ENCODE measurements at regions of chr3 and their contacts with region 1.

Region 1: GRCh38 chr3:48301020-48301796 is 32.3 kb downstream of the SPINK8 start:
- DNase-seq: peak; percentile 69 to 95 (median 81)
- ATAC-seq: peak; percentile 97
- H3K4me3 ChIP-seq: peak within 1 kb of the TSS; percentile 89
- H3K4me3 Mint-ChIP-seq: peak within 1 kb of the TSS; percentile 84 to 97 (median 91)
- H3K27ac ChIP-seq: peak within 1 kb of the TSS; percentile 96
- H3K27ac Mint-ChIP-seq: peak within 1 kb of the TSS; percentile 81 to 98 (median 94)
- H3K4me1 ChIP-seq: peaks cover 10 to 12% of the 10 kb centered on the region in 2 donors
- H3K4me1 Mint-ChIP-seq: peaks cover 26 to 47% (median 40%) of the 10 kb centered on the region in 7 donors
- H3K27me3 ChIP-seq: no peaks in the 10 kb centered on the region
- H3K27me3 Mint-ChIP-seq: peaks cover 0 to 13% (median 0%) of the 10 kb centered on the region in 5 donors

Region 2: GRCh38 chr3:48088749-48089466 is 212.3 kb before region 1 on chr3:
- CTCF ChIA-PET with region 1: no interaction called
- POLR2A ChIA-PET with region 1: no interaction called
- intact Hi-C with region 1: loop called in 1 of 2 experiments (anchors 2 kb)
- DNase-seq: peak; percentile 89 to 96 (median 94)
- ATAC-seq: peak; percentile 97
- H3K4me3 ChIP-seq: peak overlapping the region; percentile 85
- H3K4me3 Mint-ChIP-seq: peak overlapping the region; percentile 90 to 99 (median 96)
- H3K27ac ChIP-seq: peak overlapping the region; percentile 95
- H3K27ac Mint-ChIP-seq: peak overlapping the region; percentile 71 to 99 (median 98)
- H3K4me1 ChIP-seq: peaks cover 7 to 11% of the 10 kb centered on the region in 2 donors
- H3K4me1 Mint-ChIP-seq: peaks cover 14 to 33% (median 29%) of the 10 kb centered on the region in 7 donors
- H3K27me3 ChIP-seq: no peaks in the 10 kb centered on the region
- H3K27me3 Mint-ChIP-seq: peaks cover 0 to 18% (median 0%) of the 10 kb centered on the region in 5 donors

Region 3: DNA sequence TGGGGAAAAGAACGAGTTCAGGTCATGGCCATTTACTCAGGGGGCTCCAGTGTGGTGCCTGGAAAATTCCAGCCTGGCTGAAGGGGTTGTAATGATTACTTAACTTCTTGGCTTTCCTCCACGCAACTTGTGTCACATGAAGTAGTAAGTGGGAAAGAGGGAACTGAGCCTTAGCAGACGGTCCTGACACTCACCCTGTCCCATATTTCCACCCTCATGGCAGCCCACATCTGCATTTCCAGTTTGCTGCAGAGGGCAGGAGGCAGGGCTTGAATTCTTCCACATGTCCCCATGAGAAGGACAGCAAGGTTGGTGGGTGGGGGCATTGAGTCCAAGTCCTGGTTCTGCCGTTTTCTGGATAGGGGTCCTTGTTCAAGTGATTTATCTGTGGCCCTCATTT is 85.7 kb before region 1 on chr3:
- CTCF ChIA-PET with region 1: no interaction called
- POLR2A ChIA-PET with region 1: no interaction called
- intact Hi-C with region 1: no loop called
- DNase-seq: no peak
- ATAC-seq: no peak
- H3K4me3 ChIP-seq: no peak overlapping the region
- H3K4me3 Mint-ChIP-seq: no peak overlapping the region
- H3K27ac ChIP-seq: no peak overlapping the region
- H3K27ac Mint-ChIP-seq: no peak overlapping the region
- H3K4me1 ChIP-seq: no peaks in the 10 kb centered on the region
- H3K4me1 Mint-ChIP-seq: no peaks in the 10 kb centered on the region
- H3K27me3 ChIP-seq: no peaks in the 10 kb centered on the region
- H3K27me3 Mint-ChIP-seq: peaks cover 0 to 7% (median 0%) of the 10 kb centered on the region in 5 donors

Region 4: GRCh38 chr3:48268381-48269183 is 32.6 kb before region 1 on chr3:
- CTCF ChIA-PET with region 1: interaction called, 5 read pairs
- POLR2A ChIA-PET with region 1: interaction called, 8 read pairs
- intact Hi-C with region 1: loop called (anchors 1 kb)
- DNase-seq: peak; percentile 25 to 92 (median 80)
- ATAC-seq: peak; percentile 97
- H3K4me3 ChIP-seq: peak overlapping the region; percentile 40
- H3K4me3 Mint-ChIP-seq: peak overlapping the region; percentile 74 to 93 (median 82)
- H3K27ac ChIP-seq: peak overlapping the region; percentile 71
- H3K27ac Mint-ChIP-seq: peak overlapping the region; percentile 89 to 99 (median 93)
- H3K4me1 ChIP-seq: peaks cover 14 to 26% of the 10 kb centered on the region in 2 donors
- H3K4me1 Mint-ChIP-seq: peaks cover 17 to 40% (median 39%) of the 10 kb centered on the region in 7 donors
- H3K27me3 ChIP-seq: no peaks in the 10 kb centered on the region
- H3K27me3 Mint-ChIP-seq: no peaks in the 10 kb centered on the region

Region 5: GRCh38 chr3:48635222-48636021 is 334.2 kb after region 1 on chr3 and contains the start of gene SLC26A6:
- CTCF ChIA-PET with region 1: no interaction called
- POLR2A ChIA-PET with region 1: no interaction called
- intact Hi-C with region 1: loop called (anchors 1 to 10 kb)
- DNase-seq: peak; percentile 81 to 98 (median 86)
- ATAC-seq: peak; percentile 98
- H3K4me3 ChIP-seq: peak within 1 kb of the TSS; percentile 76
- H3K4me3 Mint-ChIP-seq: peak within 1 kb of the TSS; percentile 79 to 92 (median 88)
- H3K27ac ChIP-seq: peak within 1 kb of the TSS; percentile 70
- H3K27ac Mint-ChIP-seq: peak within 1 kb of the TSS in 7 of 9 donors; percentile 12 to 84 (median 68)
- H3K4me1 ChIP-seq: peaks cover 0 to 11% of the 10 kb centered on the region in 2 donors
- H3K4me1 Mint-ChIP-seq: peaks cover 4 to 31% (median 22%) of the 10 kb centered on the region in 7 donors
- H3K27me3 ChIP-seq: no peaks in the 10 kb centered on the region
- H3K27me3 Mint-ChIP-seq: no peaks in the 10 kb centered on the region
- total RNA-seq, gene SLC26A6: 15.1 to 37.6 (median 31.2) TPM

Region 6: GRCh38 chr3:49856181-49857005 is 1555.2 kb after region 1 on chr3 and contains the start of gene TRAIP:
- CTCF ChIA-PET with region 1: no interaction called
- POLR2A ChIA-PET with region 1: no interaction called
- intact Hi-C with region 1: loop called in 1 of 2 experiments (anchors 5 kb)
- DNase-seq: peak; percentile 89 to 96 (median 93)
- ATAC-seq: peak; percentile 100
- H3K4me3 ChIP-seq: peak within 1 kb of the TSS; percentile 75
- H3K4me3 Mint-ChIP-seq: peak within 1 kb of the TSS; percentile 80 to 94 (median 88)
- H3K27ac ChIP-seq: peak within 1 kb of the TSS; percentile 71
- H3K27ac Mint-ChIP-seq: peak within 1 kb of the TSS; percentile 70 to 95 (median 92)
- H3K4me1 ChIP-seq: peaks cover 10 to 11% of the 10 kb centered on the region in 2 donors
- H3K4me1 Mint-ChIP-seq: peaks cover 4 to 19% (median 13%) of the 10 kb centered on the region in 7 donors
- H3K27me3 ChIP-seq: no peaks in the 10 kb centered on the region
- H3K27me3 Mint-ChIP-seq: no peaks in the 10 kb centered on the region
- total RNA-seq, gene TRAIP: 4.1 to 22.5 (median 5.7) TPM

Measured in naive thymus-derived CD4-positive, alpha-beta T cell (primary cell).